ENCODE measurements at regions of chr9 and their contacts with region 1.

Region 1: DNA sequence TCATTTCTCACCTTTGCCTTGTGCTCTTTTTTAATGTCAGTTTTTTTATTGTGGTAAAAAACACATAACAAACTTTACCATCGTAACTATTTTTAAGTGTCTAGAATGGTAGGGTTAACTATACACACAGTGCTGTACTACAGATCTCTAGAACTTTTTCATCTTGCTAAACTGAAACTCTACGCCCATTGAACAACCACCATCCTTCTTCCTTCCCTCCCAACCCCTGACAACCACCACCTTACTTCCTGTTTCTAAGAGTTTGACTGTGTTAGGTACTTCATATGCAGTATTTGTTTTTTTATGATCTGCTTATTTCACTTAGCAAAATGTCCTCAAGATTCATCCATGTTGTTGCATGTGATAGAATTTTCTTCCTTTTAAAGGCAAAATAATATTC is 54.9 kb downstream of the PSAT1 start:
- DNase-seq: no peak
- H3K4me3 Mint-ChIP-seq: peak overlapping the region; percentile 17
- H3K27ac Mint-ChIP-seq: peak overlapping the region; percentile 25
- H3K4me1 Mint-ChIP-seq: peaks cover 13% of the 10 kb centered on the region
- H3K27me3 Mint-ChIP-seq: peaks cover 1% of the 10 kb centered on the region

Region 2: GRCh38 chr9:78273761-78274160 is 78.1 kb before region 1 on chr9:
- intact Hi-C with region 1: loop called (anchors 5 kb)
- DNase-seq: no peak
- H3K4me3 Mint-ChIP-seq: no peak overlapping the region
- H3K27ac Mint-ChIP-seq: no peak overlapping the region
- H3K4me1 Mint-ChIP-seq: peaks cover 6% of the 10 kb centered on the region
- H3K27me3 Mint-ChIP-seq: no peaks in the 10 kb centered on the region

Region 3: DNA sequence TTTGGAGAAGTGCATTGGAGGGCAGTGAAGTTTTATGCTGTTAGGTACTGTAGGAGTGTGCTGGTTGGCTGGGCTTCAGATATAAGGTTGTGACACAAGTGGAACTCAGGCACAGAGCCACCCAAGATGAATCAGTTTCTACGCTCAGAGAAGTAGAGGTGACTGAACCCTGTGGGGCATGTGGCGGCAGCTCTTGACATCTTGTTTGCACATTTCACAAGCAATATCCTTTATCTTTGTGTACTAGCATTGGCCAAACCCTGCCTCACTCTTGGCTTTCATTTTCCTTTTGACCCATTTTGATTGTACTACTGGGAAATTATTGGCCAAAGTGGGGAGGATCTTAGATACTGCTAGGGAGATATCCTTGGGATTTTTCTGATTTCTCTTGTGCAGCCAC is 55.1 kb after region 1 on chr9:
- intact Hi-C with region 1: no loop called
- DNase-seq: no peak
- H3K4me3 Mint-ChIP-seq: no peak overlapping the region
- H3K27ac Mint-ChIP-seq: no peak overlapping the region
- H3K4me1 Mint-ChIP-seq: no peaks in the 10 kb centered on the region
- H3K27me3 Mint-ChIP-seq: no peaks in the 10 kb centered on the region